ENCODE measurements at regions of chr22 and their contacts with region 1.

Region 1: DNA sequence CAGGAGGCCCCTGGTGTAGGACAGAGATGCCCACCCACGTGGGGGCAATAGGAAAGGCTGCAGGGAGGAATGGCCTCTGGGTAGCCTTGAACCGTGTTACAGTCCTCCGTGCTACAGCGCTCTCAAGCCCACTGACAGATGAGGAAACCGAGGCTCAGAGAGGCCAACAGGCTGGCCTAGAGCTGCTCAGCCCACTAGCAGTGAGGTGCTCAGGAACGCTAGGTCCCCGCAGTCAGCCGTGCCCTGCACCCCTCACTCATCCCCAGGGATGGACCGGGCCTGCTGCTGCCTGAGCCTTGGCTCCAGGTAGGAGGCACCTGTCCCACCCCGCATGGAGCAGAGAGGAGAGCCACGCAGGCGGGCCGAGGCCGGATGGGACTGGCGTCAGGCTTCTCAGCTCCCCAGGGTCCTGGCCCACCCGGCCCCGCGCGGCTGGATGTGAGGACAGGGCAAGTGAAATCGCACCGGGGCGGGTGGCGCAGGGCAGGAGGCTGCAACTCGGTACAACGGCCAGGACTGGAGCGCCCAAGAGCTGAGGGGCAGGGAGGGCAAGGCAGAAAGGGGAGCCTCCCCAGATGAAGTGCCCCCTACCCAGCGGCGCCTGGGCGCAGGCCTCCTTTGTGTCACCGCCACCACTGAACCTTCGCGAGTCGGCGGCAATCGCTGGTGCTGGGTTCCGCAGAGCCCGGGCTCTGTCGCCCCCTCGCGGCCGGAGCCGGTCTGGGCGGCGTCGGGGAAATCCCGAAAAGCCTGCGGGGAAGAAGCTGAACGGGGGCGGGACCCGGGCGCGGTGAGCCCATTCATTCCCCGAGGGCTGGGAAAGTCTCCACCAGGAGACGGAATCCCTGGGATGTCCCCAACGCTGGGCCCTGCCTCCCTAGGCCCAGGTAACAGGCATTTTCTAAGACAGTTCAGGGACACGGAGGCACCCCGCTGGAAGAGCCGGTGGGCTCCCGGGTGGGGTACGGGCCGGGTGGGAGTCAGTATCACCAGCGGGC is 8.4 kb upstream of the SLC2A11 start:
- DNase-seq: peak; percentile 89
- ATAC-seq: peak; percentile 80
- H3K4me3 ChIP-seq: peak overlapping the region in 3 of 5 experiments; percentile 35 to 54 (median 40)
- H3K4me3 Mint-ChIP-seq: peak overlapping the region; percentile 52
- H3K27ac ChIP-seq: no peak overlapping the region
- H3K27ac Mint-ChIP-seq: peak overlapping the region; percentile 61
- H3K4me1 ChIP-seq: peaks cover 38 to 62% of the 10 kb centered on the region in 2 donors
- H3K4me1 Mint-ChIP-seq: peaks cover 68% of the 10 kb centered on the region
- H3K27me3 ChIP-seq: no peaks in the 10 kb centered on the region
- H3K27me3 Mint-ChIP-seq: no peaks in the 10 kb centered on the region
- CTCF ChIP-seq: peak; percentile 94

Region 2: DNA sequence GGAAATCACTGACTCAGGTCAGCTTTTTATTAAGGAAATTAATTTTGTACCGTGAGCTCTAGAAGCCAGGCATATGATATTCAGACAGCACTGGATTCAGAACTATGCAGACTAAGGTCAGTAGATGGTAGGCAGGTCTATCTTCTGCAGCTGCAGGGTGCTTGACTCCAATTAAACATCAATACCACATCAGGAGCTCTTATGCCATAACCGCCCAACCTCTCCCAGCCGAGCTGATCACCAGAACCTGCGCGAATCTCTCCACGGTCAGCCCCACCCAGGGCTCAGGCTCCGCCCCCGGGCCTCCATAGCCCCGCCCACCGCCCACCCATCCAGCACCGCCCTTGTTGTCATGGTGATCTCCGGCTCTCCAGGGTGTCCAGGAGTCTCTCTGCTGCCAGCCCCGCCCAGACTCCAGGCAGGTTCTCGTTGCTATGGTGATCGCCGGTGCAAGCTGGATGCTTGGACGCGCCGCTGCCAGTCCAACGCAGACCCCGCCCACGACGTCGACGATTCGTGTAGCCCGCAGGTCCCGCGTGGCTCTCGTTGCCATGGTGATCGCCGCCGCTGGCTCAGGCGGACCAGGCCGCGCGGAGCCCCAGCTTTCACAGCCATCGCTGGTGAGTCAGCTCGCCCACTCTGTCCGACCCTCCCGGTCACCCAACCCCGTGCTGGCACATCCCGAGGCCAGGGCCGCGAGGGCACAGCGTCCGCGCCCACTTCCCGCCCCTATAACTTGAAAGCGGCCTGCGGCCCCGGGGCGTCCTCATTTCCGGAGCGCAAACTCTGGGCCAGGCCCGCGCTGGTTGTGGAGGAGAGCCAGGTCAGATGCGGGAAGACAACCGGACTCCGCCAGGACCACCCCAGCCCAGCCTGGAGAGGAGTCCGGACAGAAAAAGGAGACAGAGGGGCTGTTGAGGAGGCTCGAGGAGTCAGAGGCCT is 704.1 kb before region 1 on chr22 and contains the start of gene RAB36:
- CTCF ChIA-PET with region 1: no interaction called
- POLR2A ChIA-PET with region 1: interaction called, 5 read pairs
- intact Hi-C with region 1: loop called (anchors 10 kb)
- DNase-seq: peak; percentile 99
- ATAC-seq: peak; percentile 60
- H3K4me3 ChIP-seq: peak within 1 kb of the TSS; percentile 16 to 52 (median 43)
- H3K4me3 Mint-ChIP-seq: peak within 1 kb of the TSS; percentile 89
- H3K27ac ChIP-seq: peak within 1 kb of the TSS; percentile 65 to 83
- H3K27ac Mint-ChIP-seq: peak within 1 kb of the TSS; percentile 96
- H3K4me1 ChIP-seq: peaks cover 41 to 58% of the 10 kb centered on the region in 2 donors
- H3K4me1 Mint-ChIP-seq: peaks cover 44% of the 10 kb centered on the region
- H3K27me3 ChIP-seq: no peaks in the 10 kb centered on the region
- H3K27me3 Mint-ChIP-seq: no peaks in the 10 kb centered on the region
- CTCF ChIP-seq: no peak
- total RNA-seq, gene RAB36: 1.9 and 3.3 TPM in 2 replicates

Region 3: DNA sequence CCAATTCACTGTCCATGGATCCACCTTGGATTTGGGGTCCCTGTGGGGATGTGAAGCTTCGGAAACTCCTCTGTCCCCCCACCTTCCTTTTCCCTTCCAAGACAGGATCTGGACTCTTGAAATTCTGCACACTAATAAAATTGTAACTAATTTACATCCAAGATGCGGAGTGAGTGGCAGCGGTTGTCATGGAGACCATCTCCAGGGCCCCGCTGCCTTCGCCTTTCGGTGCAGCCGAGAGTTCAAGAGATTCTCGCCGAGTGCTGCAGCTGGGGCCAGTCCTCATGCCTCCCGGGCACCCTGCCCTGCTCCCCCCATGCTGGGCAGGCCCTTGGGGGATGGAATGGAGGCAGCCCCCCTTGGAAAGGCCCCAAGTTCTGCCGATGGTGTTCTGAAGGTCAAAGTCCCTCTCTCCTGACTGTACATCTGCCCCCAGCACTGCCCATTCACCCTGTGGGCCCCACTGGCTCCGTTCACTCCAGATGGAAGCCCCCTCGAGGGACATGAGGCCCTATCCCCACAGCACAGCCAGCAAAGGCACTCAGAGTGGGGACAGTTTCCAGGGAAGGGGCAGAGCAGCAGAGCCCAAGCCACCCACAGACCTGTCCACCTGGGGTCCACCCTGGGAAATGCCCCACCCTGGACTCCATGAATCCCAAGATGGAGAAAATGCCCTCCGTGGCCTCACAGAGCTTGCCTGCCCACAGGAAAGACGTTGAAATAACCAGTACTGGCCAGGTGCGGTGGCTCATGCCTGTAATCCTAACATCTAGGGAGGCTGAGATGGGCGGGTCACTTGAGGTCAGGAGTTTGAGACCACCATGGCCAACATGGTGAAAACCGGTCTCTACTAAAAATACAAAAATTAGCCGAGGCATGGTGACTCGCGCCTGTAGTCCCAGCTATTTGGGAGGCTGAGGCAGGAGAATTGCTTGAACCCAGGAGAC is 295.1 kb before region 1 on chr22:
- CTCF ChIA-PET with region 1: no interaction called
- POLR2A ChIA-PET with region 1: no interaction called
- intact Hi-C with region 1: no loop called
- DNase-seq: no peak
- ATAC-seq: no peak
- H3K4me3 ChIP-seq: no peak overlapping the region
- H3K4me3 Mint-ChIP-seq: no peak overlapping the region
- H3K27ac ChIP-seq: no peak overlapping the region
- H3K27ac Mint-ChIP-seq: no peak overlapping the region
- H3K4me1 ChIP-seq: no peaks in the 10 kb centered on the region
- H3K4me1 Mint-ChIP-seq: no peaks in the 10 kb centered on the region
- H3K27me3 ChIP-seq: peaks cover 0 to 8% (median 1%) of the 10 kb centered on the region in 4 experiments
- H3K27me3 Mint-ChIP-seq: peaks cover 12% of the 10 kb centered on the region
- CTCF ChIP-seq: no peak

Region 4: DNA sequence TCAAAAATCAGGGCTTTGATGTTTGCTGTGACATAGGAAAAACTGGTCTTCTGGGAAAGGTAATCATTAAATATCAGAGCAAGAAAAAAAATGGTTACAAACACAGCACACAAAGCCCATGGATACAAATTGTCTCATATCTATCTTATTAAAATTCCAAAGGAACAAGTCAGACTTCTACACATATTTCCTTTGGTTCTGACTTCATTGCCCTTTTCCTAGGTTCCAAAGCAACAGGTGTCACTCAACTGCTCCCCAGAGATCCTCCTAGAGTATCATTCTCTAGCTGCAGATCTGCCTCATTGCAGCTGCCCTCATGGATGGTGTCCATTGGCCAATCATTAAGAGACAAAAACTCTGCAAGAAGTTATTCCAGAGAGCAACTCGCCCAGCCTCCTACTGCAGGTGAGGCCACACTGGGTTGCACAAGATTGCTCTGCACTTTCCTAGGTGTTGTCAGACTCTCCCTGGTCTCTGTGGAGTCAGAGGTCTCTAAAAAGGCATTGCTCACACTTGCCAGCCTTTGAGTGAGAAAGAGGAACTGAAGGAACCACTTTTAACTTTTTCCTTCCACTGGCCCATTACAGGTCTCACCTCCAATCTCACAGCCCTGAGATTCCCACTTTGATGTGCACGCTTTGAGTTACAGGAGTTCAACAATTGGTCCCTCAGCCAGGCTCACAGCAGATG is 222.9 kb before region 1 on chr22:
- CTCF ChIA-PET with region 1: interaction called, 4 read pairs
- POLR2A ChIA-PET with region 1: no interaction called
- intact Hi-C with region 1: loop called (anchors 5 kb)
- DNase-seq: no peak
- ATAC-seq: no peak
- H3K4me3 ChIP-seq: no peak overlapping the region
- H3K4me3 Mint-ChIP-seq: no peak overlapping the region
- H3K27ac ChIP-seq: no peak overlapping the region
- H3K27ac Mint-ChIP-seq: no peak overlapping the region
- H3K4me1 ChIP-seq: no peaks in the 10 kb centered on the region
- H3K4me1 Mint-ChIP-seq: peaks cover 2% of the 10 kb centered on the region
- H3K27me3 ChIP-seq: no peaks in the 10 kb centered on the region
- H3K27me3 Mint-ChIP-seq: no peaks in the 10 kb centered on the region
- CTCF ChIP-seq: no peak

Region 5: GRCh38 chr22:23737696-23738095 is 111.6 kb before region 1 on chr22:
- CTCF ChIA-PET with region 1: interaction called, 60 read pairs
- POLR2A ChIA-PET with region 1: interaction called, 3 read pairs
- intact Hi-C with region 1: no loop called
- DNase-seq: no peak
- ATAC-seq: no peak
- H3K4me3 ChIP-seq: no peak overlapping the region
- H3K4me3 Mint-ChIP-seq: no peak overlapping the region
- H3K27ac ChIP-seq: no peak overlapping the region
- H3K27ac Mint-ChIP-seq: no peak overlapping the region
- H3K4me1 ChIP-seq: no peaks in the 10 kb centered on the region
- H3K4me1 Mint-ChIP-seq: no peaks in the 10 kb centered on the region
- H3K27me3 ChIP-seq: no peaks in the 10 kb centered on the region
- H3K27me3 Mint-ChIP-seq: no peaks in the 10 kb centered on the region
- CTCF ChIP-seq: no peak

Region 6: GRCh38 chr22:23767673-23768548 is 81.4 kb before region 1 on chr22 and contains the start of gene CHCHD10:
- CTCF ChIA-PET with region 1: interaction called, 183 read pairs
- POLR2A ChIA-PET with region 1: interaction called, 12 read pairs
- intact Hi-C with region 1: no loop called
- DNase-seq: peak; percentile 85
- ATAC-seq: peak; percentile 65
- H3K4me3 ChIP-seq: peak within 1 kb of the TSS; percentile 46 to 87 (median 81)
- H3K4me3 Mint-ChIP-seq: peak within 1 kb of the TSS; percentile 89
- H3K27ac ChIP-seq: peak within 1 kb of the TSS; percentile 80 to 89
- H3K27ac Mint-ChIP-seq: peak within 1 kb of the TSS; percentile 90
- H3K4me1 ChIP-seq: peaks cover 61 to 89% of the 10 kb centered on the region in 2 donors
- H3K4me1 Mint-ChIP-seq: peaks cover 66% of the 10 kb centered on the region
- H3K27me3 ChIP-seq: no peaks in the 10 kb centered on the region
- H3K27me3 Mint-ChIP-seq: no peaks in the 10 kb centered on the region
- CTCF ChIP-seq: peak; percentile 73
- total RNA-seq, gene CHCHD10: 54.0 and 57.2 TPM in 2 replicates

Region 7: GRCh38 chr22:23786752-23787599 is 62.3 kb before region 1 on chr22 and contains the start of gene SMARCB1:
- CTCF ChIA-PET with region 1: interaction called, 20 read pairs
- POLR2A ChIA-PET with region 1: interaction called, 12 read pairs
- intact Hi-C with region 1: no loop called
- DNase-seq: peak; percentile 94
- ATAC-seq: peak; percentile 85
- H3K4me3 ChIP-seq: peak within 1 kb of the TSS; percentile 72 to 95 (median 84)
- H3K4me3 Mint-ChIP-seq: peak within 1 kb of the TSS; percentile 95
- H3K27ac ChIP-seq: peak within 1 kb of the TSS; percentile 94 to 98
- H3K27ac Mint-ChIP-seq: peak within 1 kb of the TSS; percentile 91
- H3K4me1 ChIP-seq: peaks cover 48 to 58% of the 10 kb centered on the region in 2 donors
- H3K4me1 Mint-ChIP-seq: peaks cover 39% of the 10 kb centered on the region
- H3K27me3 ChIP-seq: no peaks in the 10 kb centered on the region
- H3K27me3 Mint-ChIP-seq: no peaks in the 10 kb centered on the region
- CTCF ChIP-seq: no peak
- total RNA-seq, gene SMARCB1: 179 and 187 TPM in 2 replicates

Region 8: GRCh38 chr22:23806837-23807236 is 42.5 kb before region 1 on chr22:
- CTCF ChIA-PET with region 1: interaction called, 10 read pairs
- POLR2A ChIA-PET with region 1: interaction called, 15 read pairs
- intact Hi-C with region 1: no loop called
- DNase-seq: no peak
- ATAC-seq: no peak
- H3K4me3 ChIP-seq: no peak overlapping the region
- H3K4me3 Mint-ChIP-seq: peak overlapping the region; percentile 62
- H3K27ac ChIP-seq: peak overlapping the region; percentile 3 to 57
- H3K27ac Mint-ChIP-seq: peak overlapping the region; percentile 84
- H3K4me1 ChIP-seq: peaks cover 48 to 53% of the 10 kb centered on the region in 2 donors
- H3K4me1 Mint-ChIP-seq: peaks cover 60% of the 10 kb centered on the region
- H3K27me3 ChIP-seq: no peaks in the 10 kb centered on the region
- H3K27me3 Mint-ChIP-seq: no peaks in the 10 kb centered on the region
- CTCF ChIP-seq: no peak